Kidney (tissue), 22 donors: ENCODE measurements at regions of chr9 and their contacts with region 1.

Region 1: DNA sequence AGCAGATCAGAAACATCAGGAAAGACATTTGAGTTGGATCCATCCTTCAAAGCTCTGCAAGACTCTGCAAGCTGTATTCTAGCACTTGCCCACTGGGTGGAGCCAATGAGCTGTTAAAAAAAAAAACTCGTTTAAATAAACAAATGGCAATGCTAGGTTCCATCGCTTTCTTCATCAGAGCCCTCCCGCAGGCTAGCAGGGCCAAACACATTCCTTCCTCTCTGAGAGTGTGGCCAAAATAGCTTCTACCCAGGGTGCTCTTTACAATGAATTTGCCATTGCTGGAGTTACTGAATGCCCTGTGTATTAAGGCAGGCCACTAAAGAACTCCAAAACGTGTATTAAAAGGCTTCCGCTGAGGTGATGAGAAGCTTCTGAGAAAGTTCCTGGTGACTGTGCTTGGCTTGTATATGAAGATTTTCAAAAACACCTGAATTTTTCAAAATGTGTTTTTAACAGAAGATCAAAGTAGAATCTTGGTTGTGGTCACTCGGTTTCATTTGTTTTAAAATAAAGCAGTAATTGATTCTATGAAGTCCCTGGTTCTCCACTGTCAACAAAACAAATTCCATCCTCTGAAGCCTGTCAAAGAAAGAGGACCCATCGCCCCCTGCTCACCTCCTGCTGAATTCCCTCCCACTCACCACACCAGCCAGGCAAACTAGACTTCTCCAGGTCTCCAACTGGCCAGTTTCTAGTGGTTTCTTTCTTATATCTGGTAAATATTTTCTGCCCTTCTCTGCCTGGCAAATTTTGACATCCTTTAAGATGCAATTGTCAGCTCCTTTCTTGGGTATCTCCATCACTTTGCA is 36.5 kb upstream of the EQTN start:
- DNase-seq: peak in 4 of 5 donors; percentile 74 to 93 (median 87)
- H3K4me3 ChIP-seq: no peak overlapping the region
- H3K27ac ChIP-seq: no peak overlapping the region
- H3K4me1 ChIP-seq: peaks cover 0 to 10% (median 5%) of the 10 kb centered on the region in 3 donors
- H3K27me3 ChIP-seq: no peaks in the 10 kb centered on the region
- CTCF ChIP-seq: peak; percentile 82

Region 2: GRCh38 chr9:27529316-27530278 is 196.2 kb after region 1 on chr9 and contains the start of gene MOB3B:
- intact Hi-C with region 1: loop called (anchors 10 kb)
- DNase-seq: peak; percentile 88 to 94 (median 92)
- H3K4me3 ChIP-seq: peak within 1 kb of the TSS; percentile 77 to 89 (median 83)
- H3K27ac ChIP-seq: peak within 1 kb of the TSS; percentile 82
- H3K4me1 ChIP-seq: peaks cover 4 to 7% (median 5%) of the 10 kb centered on the region in 3 donors
- H3K27me3 ChIP-seq: no peaks in the 10 kb centered on the region
- CTCF ChIP-seq: peak; percentile 90
- total RNA-seq, gene MOB3B: 22.5 TPM

Region 3: DNA sequence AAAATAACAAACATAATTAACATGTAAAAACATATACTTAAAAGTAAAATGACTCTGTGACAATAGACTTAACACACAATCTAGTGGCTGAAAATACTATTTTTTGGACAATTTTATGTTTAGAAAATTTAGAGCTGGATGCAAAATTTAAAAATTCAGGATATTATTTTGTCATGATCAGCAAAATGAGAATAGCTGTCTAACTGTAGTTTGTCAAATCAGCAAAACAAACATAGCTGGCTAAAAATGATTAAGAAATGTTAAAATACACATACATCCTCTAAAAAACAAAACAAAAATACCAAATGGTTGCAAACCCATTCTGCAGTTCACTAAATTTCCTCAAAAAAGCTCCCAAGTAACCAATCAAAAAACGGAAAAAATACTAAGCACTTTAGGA is 221.3 kb after region 1 on chr9:
- intact Hi-C with region 1: loop called (anchors 5 kb)
- DNase-seq: no peak
- H3K4me3 ChIP-seq: no peak overlapping the region
- H3K27ac ChIP-seq: no peak overlapping the region
- H3K4me1 ChIP-seq: no peaks in the 10 kb centered on the region
- H3K27me3 ChIP-seq: no peaks in the 10 kb centered on the region
- CTCF ChIP-seq: no peak

Region 4: DNA sequence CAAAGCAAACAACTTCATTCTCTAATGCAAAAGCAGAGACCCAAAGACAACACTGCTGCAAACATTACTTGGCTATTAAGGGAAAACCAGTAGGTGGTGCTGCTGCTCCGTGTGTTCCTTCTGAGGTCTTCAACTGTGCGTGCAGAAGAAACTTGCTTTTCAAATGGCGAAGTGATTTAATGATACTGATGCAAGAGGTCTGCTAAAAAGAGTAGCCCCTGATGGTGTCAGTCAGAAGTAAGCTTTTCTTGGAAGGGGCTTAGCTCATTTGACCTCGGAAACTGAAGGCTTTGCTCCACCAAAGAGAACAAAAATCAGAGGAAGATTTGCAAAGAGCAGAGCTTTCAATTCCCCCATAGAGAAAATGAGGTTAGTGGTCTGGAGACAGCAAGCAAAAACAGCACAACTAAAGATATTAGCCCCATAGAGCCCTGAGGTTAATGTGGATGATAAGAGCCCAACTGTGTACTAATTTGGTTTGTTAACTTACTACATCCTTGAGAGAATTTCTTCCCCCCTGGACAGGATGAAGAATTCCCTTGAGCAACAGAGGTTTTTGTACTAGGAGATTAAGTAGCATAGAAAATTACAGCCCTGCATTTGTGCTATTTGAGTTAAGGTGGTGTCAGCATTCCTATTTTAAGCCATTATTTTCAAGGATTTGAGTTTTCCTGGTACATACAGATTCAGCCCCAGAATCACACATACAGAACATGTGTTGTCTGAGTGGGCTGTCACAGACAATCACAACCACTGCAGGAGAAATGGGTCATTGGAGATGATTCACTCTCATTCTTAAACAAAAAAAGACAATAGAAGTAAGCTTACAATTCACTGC is 393.0 kb after region 1 on chr9:
- intact Hi-C with region 1: loop called (anchors 10 kb)
- DNase-seq: peak in 4 of 5 donors; percentile 79 to 95 (median 87)
- H3K4me3 ChIP-seq: peak overlapping the region in 1 of 3 donors; percentile 22
- H3K27ac ChIP-seq: no peak overlapping the region
- H3K4me1 ChIP-seq: peaks cover 0 to 2% (median 0%) of the 10 kb centered on the region in 3 donors
- H3K27me3 ChIP-seq: no peaks in the 10 kb centered on the region
- CTCF ChIP-seq: peak; percentile 86